Breast epithelium (tissue), 4 donors: ENCODE measurements at regions of chr5 and their contacts with region 1.

Region 1: DNA sequence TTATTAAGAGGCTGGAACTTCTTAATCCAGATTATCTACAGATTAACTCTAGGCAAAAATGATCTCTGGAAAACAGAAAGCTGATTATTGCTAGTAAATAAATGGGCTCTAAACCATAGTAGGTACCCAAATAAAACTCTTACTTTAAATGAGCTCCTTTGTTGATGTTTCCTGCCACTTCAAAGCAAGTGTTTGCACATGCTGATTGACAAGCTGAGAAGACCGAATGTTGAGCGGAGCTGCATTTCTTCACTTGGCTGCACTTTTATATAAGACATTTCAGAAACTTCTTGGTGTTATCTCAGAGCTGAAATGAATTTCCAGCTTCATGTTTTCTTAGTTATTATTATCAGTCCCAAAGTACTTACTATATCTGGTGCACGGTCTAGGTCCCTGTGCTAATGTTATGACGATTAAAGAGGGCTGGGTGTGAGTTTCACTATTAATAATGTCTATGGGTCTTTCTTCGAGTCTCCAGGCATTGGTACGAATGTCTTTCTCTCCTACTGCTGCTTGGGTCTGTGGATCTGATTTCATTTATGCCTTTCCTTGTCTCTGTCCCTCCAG is 58.6 kb upstream of the CTXN3 start:
- DNase-seq: no peak
- H3K4me3 ChIP-seq: no peak overlapping the region
- H3K27ac ChIP-seq: no peak overlapping the region
- H3K4me1 ChIP-seq: no peaks in the 10 kb centered on the region
- H3K27me3 ChIP-seq: no peaks in the 10 kb centered on the region
- CTCF ChIP-seq: no peak
- POLR2A ChIP-seq: no peak

Region 2: GRCh38 chr5:126837906-126838539 is 752.2 kb before region 1 on chr5:
- intact Hi-C with region 1: no loop called
- DNase-seq: no peak
- H3K4me3 ChIP-seq: no peak overlapping the region
- H3K27ac ChIP-seq: no peak overlapping the region
- H3K4me1 ChIP-seq: no peaks in the 10 kb centered on the region
- H3K27me3 ChIP-seq: no peaks in the 10 kb centered on the region
- CTCF ChIP-seq: peak in 1 of 3 donors; percentile 21
- POLR2A ChIP-seq: no peak

Region 3: GRCh38 chr5:127068493-127069214 is 521.6 kb before region 1 on chr5:
- intact Hi-C with region 1: loop called (anchors 5 kb)
- DNase-seq: no peak
- H3K4me3 ChIP-seq: no peak overlapping the region
- H3K27ac ChIP-seq: no peak overlapping the region
- H3K4me1 ChIP-seq: no peaks in the 10 kb centered on the region
- H3K27me3 ChIP-seq: no peaks in the 10 kb centered on the region
- CTCF ChIP-seq: no peak
- POLR2A ChIP-seq: no peak

Region 4: DNA sequence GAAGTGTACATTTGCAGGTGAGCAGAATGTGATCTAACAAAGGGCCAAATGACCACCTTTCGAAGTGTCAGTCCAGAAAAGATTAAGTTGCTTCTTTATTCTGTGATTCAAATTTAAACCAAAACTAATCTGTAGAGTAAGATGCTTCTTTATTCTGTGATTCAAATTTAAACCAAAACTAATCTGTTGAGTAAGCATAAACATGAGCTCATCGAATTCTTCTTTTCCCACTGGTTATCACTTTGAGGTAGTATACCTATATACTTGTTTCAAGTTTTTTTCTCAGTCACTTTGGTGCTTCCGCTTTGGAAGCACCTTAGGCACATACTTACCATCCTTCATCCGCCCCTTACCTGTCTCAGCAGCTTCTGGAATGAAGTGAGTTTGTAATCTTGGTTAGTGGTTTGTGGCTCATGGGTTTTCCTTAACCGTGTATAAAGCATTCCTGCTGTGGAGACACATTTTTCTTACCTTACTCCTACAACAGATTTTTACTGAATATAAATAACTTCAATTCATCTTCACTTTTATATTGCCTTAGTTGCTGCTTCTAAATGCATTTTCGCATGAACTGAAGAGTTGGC is 17.9 kb after region 1 on chr5:
- intact Hi-C with region 1: no loop called
- DNase-seq: no peak
- H3K4me3 ChIP-seq: no peak overlapping the region
- H3K27ac ChIP-seq: no peak overlapping the region
- H3K4me1 ChIP-seq: no peaks in the 10 kb centered on the region
- H3K27me3 ChIP-seq: no peaks in the 10 kb centered on the region
- CTCF ChIP-seq: no peak
- POLR2A ChIP-seq: no peak

Region 5: GRCh38 chr5:127621601-127622325 is 31.5 kb after region 1 on chr5:
- intact Hi-C with region 1: no loop called
- DNase-seq: no peak
- H3K4me3 ChIP-seq: no peak overlapping the region
- H3K27ac ChIP-seq: no peak overlapping the region
- H3K4me1 ChIP-seq: no peaks in the 10 kb centered on the region
- H3K27me3 ChIP-seq: no peaks in the 10 kb centered on the region
- CTCF ChIP-seq: no peak
- POLR2A ChIP-seq: no peak